Astrocyte of the cerebellum (primary cell): ENCODE measurements at regions of chr6 and their contacts with region 1.

Region 1: DNA sequence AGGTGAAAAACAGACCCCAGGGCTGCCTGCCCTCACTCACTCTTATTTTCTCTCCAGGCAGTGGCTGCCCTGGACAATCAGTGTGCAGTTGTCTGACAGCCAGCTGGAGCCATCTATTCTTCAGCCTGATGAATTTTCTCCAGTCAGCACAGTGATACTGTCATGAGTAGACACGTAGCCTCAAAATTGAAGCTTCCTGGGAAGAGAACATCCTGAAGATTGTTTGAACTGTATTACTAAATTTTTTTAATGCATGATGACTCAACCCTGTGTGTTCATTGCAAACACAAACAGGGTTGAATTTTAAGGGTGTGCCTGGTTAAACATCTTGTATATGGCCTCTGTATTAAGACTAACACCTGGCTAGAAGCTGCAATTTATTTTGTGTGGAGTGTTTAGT is 49.8 kb upstream of the STXBP5 start:
- DNase-seq: no peak
- H3K4me3 ChIP-seq: no peak overlapping the region
- CTCF ChIP-seq: no peak

Region 2: DNA sequence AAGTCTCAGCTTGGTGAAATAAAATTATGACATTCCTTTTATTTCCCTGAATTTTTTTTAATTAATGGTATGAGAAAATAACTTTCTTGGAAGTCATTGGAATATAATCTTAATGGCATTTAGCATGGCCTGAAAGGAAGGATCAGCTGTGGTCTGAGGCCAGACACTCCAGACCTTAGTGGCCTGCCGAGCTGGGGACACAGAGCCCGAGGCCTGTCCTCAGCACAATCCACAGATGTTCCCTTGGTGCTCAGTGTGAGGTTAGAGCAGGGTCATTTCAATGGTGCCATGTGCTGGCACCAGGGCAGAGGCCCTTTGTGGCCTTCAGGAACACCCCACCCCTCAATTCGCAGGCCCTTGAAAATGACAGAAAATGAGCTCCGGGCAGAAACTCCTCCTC is 435.1 kb before region 1 on chr6:
- in situ Hi-C with region 1: no loop called
- DNase-seq: no peak
- H3K4me3 ChIP-seq: no peak overlapping the region
- CTCF ChIP-seq: no peak

Region 3: GRCh38 chr6:147194652-147195411 is 40.4 kb after region 1 on chr6:
- in situ Hi-C with region 1: loop called (anchors 5 kb)
- DNase-seq: no peak
- H3K4me3 ChIP-seq: no peak overlapping the region
- CTCF ChIP-seq: no peak

Region 4: DNA sequence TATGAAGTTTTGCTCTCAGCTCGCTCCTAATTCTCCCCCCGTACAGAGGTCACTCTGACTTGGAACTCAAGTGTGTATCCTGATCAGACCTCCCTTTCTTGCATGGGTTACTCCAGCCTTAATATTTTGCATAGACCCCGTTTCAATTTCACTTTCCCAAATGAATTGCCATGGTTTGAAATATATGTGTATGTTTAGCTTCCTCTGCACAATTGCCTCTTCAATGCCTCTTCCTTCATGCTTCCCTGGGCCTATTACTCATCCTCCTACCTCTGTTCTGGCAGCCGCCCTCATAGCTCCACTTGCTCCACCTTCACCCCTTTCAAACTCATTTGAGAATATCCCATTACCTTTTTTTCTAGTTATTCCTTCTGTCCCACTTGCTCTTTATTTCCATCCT is 264.1 kb after region 1 on chr6:
- in situ Hi-C with region 1: no loop called
- DNase-seq: no peak
- H3K4me3 ChIP-seq: no peak overlapping the region
- CTCF ChIP-seq: no peak

Region 5: DNA sequence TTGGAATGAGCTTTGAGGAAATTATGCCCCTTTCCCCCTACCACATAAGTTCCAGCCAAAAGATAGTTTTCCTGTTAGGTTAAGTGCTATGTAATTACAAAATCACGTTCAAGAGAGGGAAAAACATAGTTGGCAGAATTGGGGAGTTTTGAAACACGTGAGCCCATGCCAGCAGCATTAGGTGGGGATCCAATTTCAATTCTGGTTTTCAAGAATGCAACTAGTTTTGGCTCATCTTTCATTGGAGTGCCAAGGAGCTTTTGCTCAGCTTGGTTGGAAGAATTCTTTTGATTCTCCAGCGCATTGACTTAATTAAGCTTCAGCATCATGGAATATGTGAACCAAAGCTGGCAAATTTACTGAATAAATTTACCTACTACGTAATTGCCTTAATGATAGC is 449.9 kb after region 1 on chr6:
- in situ Hi-C with region 1: no loop called
- DNase-seq: peak; percentile 15
- H3K4me3 ChIP-seq: no peak overlapping the region
- CTCF ChIP-seq: no peak